Common myeloid progenitor, CD34-positive (primary cell): ENCODE measurements at regions of chr20 and their contacts with region 1.

Region 1: DNA sequence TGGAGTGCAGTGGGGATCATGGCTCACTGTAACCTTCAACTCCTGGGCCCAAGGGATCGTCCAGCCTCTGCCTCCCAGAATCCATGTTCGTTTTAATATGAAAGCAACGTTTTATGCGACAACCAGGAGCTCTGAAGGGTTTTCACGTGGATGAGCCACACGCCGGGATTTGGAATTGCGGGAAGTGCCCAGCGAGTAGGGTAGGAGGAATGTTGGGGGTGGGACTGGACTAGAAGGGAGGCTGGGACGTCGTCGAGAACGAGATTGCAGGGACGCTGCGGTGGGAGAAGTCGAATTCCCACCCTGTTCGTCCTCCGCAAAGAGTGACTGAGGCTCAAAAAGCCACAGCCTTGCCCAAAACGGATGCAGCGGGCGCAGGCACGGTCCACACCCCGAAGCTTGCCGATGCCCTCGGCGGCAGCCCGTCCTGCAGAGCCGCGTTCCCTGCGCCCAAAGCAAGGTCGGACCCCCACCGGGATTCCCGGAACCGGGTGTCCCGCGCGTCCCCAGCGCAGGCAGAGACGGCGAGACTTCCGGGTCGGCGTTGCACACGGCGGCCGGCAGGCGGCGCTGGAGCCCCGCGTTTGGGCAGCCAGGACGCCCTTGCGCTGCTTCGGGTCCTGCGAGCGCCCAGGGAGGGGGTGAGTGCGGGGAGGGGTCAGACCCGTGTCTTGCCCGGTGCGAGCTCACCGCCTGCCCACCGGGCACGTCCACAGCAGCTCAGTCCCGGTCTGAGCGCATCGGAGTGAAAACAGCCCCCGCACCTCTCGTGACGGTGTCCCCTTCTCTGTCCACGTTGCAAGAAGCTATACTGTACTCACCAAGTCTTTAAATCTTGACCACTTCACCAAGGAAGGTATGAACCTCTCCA is 87.8 kb downstream of the DHX35 start:
- DNase-seq: peak; percentile 56 to 71 (median 69)
- H3K4me3 ChIP-seq: peak overlapping the region; percentile 68 to 92 (median 81)
- H3K27ac ChIP-seq: peak overlapping the region in 1 of 2 experiments; percentile 4
- H3K4me1 ChIP-seq: peaks cover 0 to 11% (median 11%) of the 10 kb centered on the region in 4 experiments
- H3K27me3 ChIP-seq: peaks cover 0 to 3% (median 0%) of the 10 kb centered on the region in 5 experiments

Region 2: GRCh38 chr20:38919683-38920082 is 130.2 kb before region 1 on chr20:
- CTCF ChIA-PET with region 1: interaction called, 39 read pairs
- POLR2A ChIA-PET with region 1: no interaction called
- DNase-seq: no peak
- H3K4me3 ChIP-seq: no peak overlapping the region
- H3K27ac ChIP-seq: no peak overlapping the region
- H3K4me1 ChIP-seq: no peaks in the 10 kb centered on the region
- H3K27me3 ChIP-seq: no peaks in the 10 kb centered on the region

Region 3: GRCh38 chr20:39036011-39036410 is 13.9 kb before region 1 on chr20:
- CTCF ChIA-PET with region 1: interaction called, 26 read pairs
- POLR2A ChIA-PET with region 1: no interaction called
- DNase-seq: no peak
- H3K4me3 ChIP-seq: no peak overlapping the region
- H3K27ac ChIP-seq: no peak overlapping the region
- H3K4me1 ChIP-seq: no peaks in the 10 kb centered on the region
- H3K27me3 ChIP-seq: no peaks in the 10 kb centered on the region

Region 4: GRCh38 chr20:39070484-39071231 is 20.7 kb after region 1 on chr20:
- CTCF ChIA-PET with region 1: interaction called, 32 read pairs
- POLR2A ChIA-PET with region 1: no interaction called
- DNase-seq: no peak
- H3K4me3 ChIP-seq: no peak overlapping the region
- H3K27ac ChIP-seq: no peak overlapping the region
- H3K4me1 ChIP-seq: no peaks in the 10 kb centered on the region
- H3K27me3 ChIP-seq: peaks cover 0 to 20% (median 6%) of the 10 kb centered on the region in 5 experiments

Region 5: GRCh38 chr20:39075731-39076130 is 25.8 kb after region 1 on chr20:
- CTCF ChIA-PET with region 1: interaction called, 44 read pairs
- POLR2A ChIA-PET with region 1: no interaction called
- DNase-seq: no peak
- H3K4me3 ChIP-seq: no peak overlapping the region
- H3K27ac ChIP-seq: no peak overlapping the region
- H3K4me1 ChIP-seq: peaks cover 0 to 4% (median 3%) of the 10 kb centered on the region in 4 experiments
- H3K27me3 ChIP-seq: peaks cover 0 to 8% (median 0%) of the 10 kb centered on the region in 5 experiments

Region 6: DNA sequence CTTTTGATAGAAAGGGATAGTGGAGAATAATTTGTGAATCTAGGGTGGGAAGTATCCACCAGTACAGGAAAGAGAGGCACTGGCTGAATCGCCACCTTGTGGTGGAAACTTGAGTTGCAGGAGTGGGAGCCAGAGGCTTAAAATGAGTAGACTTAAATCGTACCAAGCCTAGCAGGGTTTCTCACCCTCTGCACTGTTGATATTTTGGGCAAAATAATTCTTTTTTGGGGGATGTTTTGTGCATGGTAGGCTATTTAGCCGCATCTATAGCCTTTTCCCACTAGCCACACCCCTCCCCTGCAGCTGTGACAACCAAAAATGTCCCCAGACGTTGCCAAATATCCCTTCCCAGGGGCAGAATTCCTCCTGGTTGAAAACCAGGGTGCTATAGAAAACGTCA is 31.3 kb after region 1 on chr20:
- CTCF ChIA-PET with region 1: interaction called, 44 read pairs
- POLR2A ChIA-PET with region 1: no interaction called
- DNase-seq: peak; percentile 66 to 85 (median 76)
- H3K4me3 ChIP-seq: no peak overlapping the region
- H3K27ac ChIP-seq: no peak overlapping the region
- H3K4me1 ChIP-seq: peaks cover 0 to 4% (median 3%) of the 10 kb centered on the region in 4 experiments
- H3K27me3 ChIP-seq: peaks cover 0 to 9% (median 0%) of the 10 kb centered on the region in 5 experiments

Region 7: GRCh38 chr20:39103732-39104131 is 53.8 kb after region 1 on chr20:
- CTCF ChIA-PET with region 1: no interaction called
- POLR2A ChIA-PET with region 1: no interaction called
- DNase-seq: no peak
- H3K4me3 ChIP-seq: no peak overlapping the region
- H3K27ac ChIP-seq: no peak overlapping the region
- H3K4me1 ChIP-seq: peaks cover 0 to 3% (median 0%) of the 10 kb centered on the region in 4 experiments
- H3K27me3 ChIP-seq: peaks cover 0 to 28% (median 8%) of the 10 kb centered on the region in 5 experiments